Vagina (tissue), 2 donors: ENCODE measurements at regions of chr4 and their contacts with region 1.

Region 1: DNA sequence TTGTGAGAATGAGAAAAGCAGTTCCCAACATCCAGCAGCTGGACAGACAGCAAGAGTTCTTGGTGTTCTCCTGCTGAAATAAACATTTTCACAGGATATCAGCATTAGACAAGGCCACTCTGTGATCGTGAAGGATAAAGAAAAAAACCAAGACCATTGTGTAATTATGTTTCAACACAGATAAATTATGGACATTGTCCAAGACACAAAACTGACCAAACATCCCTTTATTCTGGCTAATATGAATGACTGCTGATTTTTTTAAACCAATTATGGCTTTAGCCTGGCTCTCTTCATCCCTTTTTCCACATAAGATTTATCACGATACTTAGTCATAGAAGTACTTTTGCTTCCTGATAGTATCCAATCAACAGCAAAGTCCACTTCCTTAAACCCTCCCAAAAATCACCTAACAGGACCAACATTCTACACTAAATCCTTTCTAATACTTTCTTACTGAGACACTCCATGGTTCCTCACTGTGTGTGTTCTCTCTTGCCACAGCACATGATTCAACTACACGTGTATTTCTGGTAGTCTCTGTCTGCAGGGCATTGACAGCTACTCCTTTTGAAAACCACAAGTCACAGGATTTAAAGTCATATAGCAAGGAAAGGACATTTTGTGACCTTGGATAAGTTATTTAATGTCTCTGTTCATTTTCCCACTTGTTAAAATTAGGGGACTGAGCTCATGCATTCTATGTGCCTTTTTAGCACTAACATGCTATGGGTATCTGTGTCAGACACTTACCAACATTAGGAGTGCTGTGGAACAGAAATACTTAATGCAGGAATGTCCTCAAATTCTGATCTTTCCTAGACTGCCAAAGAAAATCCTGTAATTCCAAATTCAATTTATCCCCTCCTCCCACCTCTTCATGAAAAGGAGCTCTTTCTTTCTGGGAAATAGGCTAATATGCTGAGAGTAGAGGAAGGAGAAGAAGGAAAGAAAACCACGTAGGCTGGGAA is 137.2 kb upstream of the PGRMC2 start:
- DNase-seq: no peak
- H3K4me3 ChIP-seq: no peak overlapping the region
- H3K27ac ChIP-seq: peak overlapping the region; percentile 0
- H3K4me1 ChIP-seq: no peaks in the 10 kb centered on the region
- H3K27me3 ChIP-seq: no peaks in the 10 kb centered on the region
- CTCF ChIP-seq: no peak
- POLR2A ChIP-seq: no peak

Region 2: GRCh38 chr4:128220286-128221235 is 204.3 kb before region 1 on chr4:
- intact Hi-C with region 1: no loop called
- DNase-seq: no peak
- H3K4me3 ChIP-seq: no peak overlapping the region
- H3K27ac ChIP-seq: no peak overlapping the region
- H3K4me1 ChIP-seq: no peaks in the 10 kb centered on the region
- H3K27me3 ChIP-seq: no peaks in the 10 kb centered on the region
- CTCF ChIP-seq: no peak
- POLR2A ChIP-seq: no peak

Region 3: DNA sequence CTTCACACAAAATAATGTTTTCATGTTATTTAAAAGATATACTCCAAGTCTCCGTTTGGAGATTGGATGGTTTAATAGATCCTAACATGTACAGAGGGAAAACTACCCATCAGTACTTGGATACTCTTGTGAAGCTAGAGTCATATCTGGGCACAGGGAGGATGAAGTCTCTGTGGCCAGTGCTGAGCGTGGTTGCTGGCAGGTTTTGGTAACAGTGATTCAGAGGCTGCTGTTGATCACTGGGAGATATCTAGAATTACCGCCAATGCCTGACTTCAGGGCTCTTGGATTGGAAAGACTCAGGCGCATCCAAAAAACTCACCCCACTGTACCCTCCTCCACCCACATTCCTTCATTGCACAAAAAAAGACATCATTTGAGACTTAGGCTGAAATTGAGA is 30.0 kb before region 1 on chr4:
- intact Hi-C with region 1: loop called (anchors 2 kb)
- DNase-seq: no peak
- H3K4me3 ChIP-seq: no peak overlapping the region
- H3K27ac ChIP-seq: peak overlapping the region; percentile 74
- H3K4me1 ChIP-seq: peaks cover 42% of the 10 kb centered on the region
- H3K27me3 ChIP-seq: no peaks in the 10 kb centered on the region
- CTCF ChIP-seq: no peak
- POLR2A ChIP-seq: no peak